ENCODE measurements at regions of chr19 and their contacts with region 1.

Region 1: GRCh38 chr19:389255-389934 is 19.6 kb downstream of the C2CD4C start:
- DNase-seq: no peak
- H3K4me3 ChIP-seq: no peak overlapping the region
- H3K27ac ChIP-seq: no peak overlapping the region
- H3K4me1 ChIP-seq: no peaks in the 10 kb centered on the region
- H3K27me3 ChIP-seq: no peaks in the 10 kb centered on the region
- CTCF ChIP-seq: no peak

Region 2: DNA sequence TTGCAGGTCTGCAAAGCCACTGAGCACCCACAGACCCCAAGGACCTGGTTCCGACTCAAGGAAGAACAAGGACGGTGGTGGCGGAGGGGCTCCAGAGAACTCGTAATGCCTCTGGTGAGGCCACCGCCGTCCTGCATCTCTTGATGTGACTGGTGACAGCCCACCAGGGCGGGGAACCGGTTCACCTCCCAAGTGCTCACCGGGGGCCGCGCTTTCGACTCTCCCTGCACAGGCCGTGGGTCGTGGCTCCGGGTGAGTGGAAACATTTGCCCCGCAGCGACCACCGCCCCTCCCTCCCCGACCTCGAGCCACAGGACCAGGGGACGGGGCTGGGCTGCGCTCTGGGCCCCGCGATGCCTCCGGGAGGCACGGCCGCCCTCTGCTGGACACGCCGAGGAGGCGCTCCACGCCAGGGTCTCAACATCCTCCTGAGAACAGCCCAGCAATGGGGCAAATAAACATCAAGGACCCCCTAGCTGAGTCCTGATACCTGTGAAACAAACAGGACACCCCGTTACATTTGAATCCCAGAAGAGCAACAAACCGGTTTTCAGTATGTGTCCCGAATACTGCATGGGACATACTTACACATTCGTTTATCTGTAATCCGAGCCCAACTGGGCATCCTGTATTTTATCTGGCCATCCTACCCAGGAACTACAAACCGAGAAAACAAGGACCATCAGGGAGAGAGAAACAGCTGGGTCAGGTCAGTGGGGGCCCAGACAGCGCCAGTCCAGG is 94.3 kb before region 1 on chr19:
- CTCF ChIA-PET with region 1: no interaction called
- POLR2A ChIA-PET with region 1: no interaction called
- intact Hi-C with region 1: no loop called
- DNase-seq: peak; percentile 49
- H3K4me3 ChIP-seq: no peak overlapping the region
- H3K27ac ChIP-seq: no peak overlapping the region
- H3K4me1 ChIP-seq: peaks cover 8% of the 10 kb centered on the region
- H3K27me3 ChIP-seq: peaks cover 32% of the 10 kb centered on the region
- CTCF ChIP-seq: peak; percentile 84

Region 3: GRCh38 chr19:459724-460511 is 70.5 kb after region 1 on chr19:
- CTCF ChIA-PET with region 1: no interaction called
- POLR2A ChIA-PET with region 1: no interaction called
- intact Hi-C with region 1: no loop called
- DNase-seq: peak; percentile 35
- H3K4me3 ChIP-seq: peak overlapping the region; percentile 48
- H3K27ac ChIP-seq: no peak overlapping the region
- H3K4me1 ChIP-seq: no peaks in the 10 kb centered on the region
- H3K27me3 ChIP-seq: peaks cover 24% of the 10 kb centered on the region
- CTCF ChIP-seq: no peak

Region 4: GRCh38 chr19:480016-480855 is 90.8 kb after region 1 on chr19:
- CTCF ChIA-PET with region 1: interaction called, 15 read pairs
- POLR2A ChIA-PET with region 1: no interaction called
- intact Hi-C with region 1: no loop called
- DNase-seq: peak; percentile 85
- H3K4me3 ChIP-seq: no peak overlapping the region
- H3K27ac ChIP-seq: no peak overlapping the region
- H3K4me1 ChIP-seq: peaks cover 10% of the 10 kb centered on the region
- H3K27me3 ChIP-seq: peaks cover 10% of the 10 kb centered on the region
- CTCF ChIP-seq: peak; percentile 86